ENCODE measurements at regions of chr9 and their contacts with region 1.

Region 1: DNA sequence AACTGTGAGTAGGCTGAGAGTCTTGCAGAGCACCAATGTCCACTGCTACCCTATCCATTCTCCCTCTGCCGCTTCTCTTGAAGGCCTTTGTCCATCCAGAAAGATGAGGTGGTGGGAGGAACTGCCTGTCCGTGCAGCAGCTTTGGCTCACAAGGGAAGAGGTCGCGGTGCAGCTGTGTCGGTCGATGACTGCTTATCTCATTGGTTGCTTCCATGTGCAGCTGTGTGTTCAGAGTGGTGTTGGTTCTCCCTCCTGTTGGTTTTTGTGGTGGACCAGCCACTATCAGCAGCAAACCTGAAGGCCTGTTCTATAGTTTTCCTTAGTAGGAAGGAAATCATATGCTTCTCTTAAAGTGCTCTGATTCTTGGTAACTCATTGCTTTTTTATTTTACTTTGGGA is 40.7 kb downstream of the SPTAN1 start:
- DNase-seq: no peak
- ATAC-seq: no peak
- H3K4me3 ChIP-seq: no peak overlapping the region
- H3K4me3 Mint-ChIP-seq: no peak overlapping the region
- H3K27ac ChIP-seq: no peak overlapping the region
- H3K27ac Mint-ChIP-seq: no peak overlapping the region
- H3K4me1 ChIP-seq: no peaks in the 10 kb centered on the region
- H3K4me1 Mint-ChIP-seq: peaks cover 9% of the 10 kb centered on the region
- H3K27me3 ChIP-seq: no peaks in the 10 kb centered on the region
- H3K27me3 Mint-ChIP-seq: no peaks in the 10 kb centered on the region
- CTCF ChIP-seq: no peak

Region 2: DNA sequence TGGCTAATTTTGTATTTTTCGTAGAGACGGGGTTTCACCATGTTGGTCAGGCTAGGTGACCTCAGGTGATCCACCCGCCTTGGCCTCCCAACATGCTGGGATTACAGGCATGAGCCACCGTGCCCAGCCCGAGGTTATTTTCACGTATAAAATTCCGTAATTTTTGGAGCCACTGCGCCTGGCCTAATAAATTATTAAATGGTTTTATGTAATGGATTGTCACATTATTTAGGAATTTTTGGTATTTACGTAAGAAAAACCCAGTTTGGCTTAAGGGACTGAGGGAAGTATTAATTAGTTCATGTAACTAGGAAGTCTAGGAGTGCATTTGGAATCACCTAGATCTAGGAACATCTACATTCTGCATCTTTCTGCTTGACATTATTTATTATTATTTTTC is 80.2 kb before region 1 on chr9:
- CTCF ChIA-PET with region 1: no interaction called
- POLR2A ChIA-PET with region 1: no interaction called
- intact Hi-C with region 1: loop called in 1 of 2 experiments (anchors 10 kb)
- DNase-seq: no peak
- ATAC-seq: no peak
- H3K4me3 ChIP-seq: no peak overlapping the region
- H3K4me3 Mint-ChIP-seq: no peak overlapping the region
- H3K27ac ChIP-seq: no peak overlapping the region
- H3K27ac Mint-ChIP-seq: no peak overlapping the region
- H3K4me1 ChIP-seq: peaks cover 7% of the 10 kb centered on the region
- H3K4me1 Mint-ChIP-seq: peaks cover 17% of the 10 kb centered on the region
- H3K27me3 ChIP-seq: no peaks in the 10 kb centered on the region
- H3K27me3 Mint-ChIP-seq: no peaks in the 10 kb centered on the region
- CTCF ChIP-seq: no peak

Measured in CD4-positive, alpha-beta T cell (primary cell).